ENCODE measurements at regions of chr22 and their contacts with region 1.

Region 1: DNA sequence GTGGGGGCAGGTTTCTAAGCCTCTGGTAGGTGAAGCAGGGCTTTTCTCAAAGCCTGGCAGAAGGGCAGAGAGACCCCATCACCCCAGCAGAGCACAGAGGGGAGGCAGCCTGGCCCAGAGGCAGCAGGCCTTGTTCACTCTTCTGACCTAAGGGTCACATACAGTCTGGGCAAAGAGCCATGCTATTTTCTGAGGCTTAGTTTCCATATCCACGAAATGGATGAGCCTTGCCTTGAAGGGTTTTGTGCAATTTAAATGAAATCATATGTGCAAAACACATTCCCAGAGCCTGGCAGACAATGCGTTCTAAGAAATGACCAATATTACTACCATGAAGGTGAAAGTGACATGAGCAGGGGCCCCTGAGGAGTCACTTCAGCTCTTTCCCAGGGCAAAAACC is 44.5 kb downstream of the HIRA start:
- DNase-seq: no peak
- ATAC-seq: no peak
- H3K4me3 ChIP-seq: no peak overlapping the region
- H3K27ac ChIP-seq: no peak overlapping the region
- H3K4me1 ChIP-seq: peaks cover 5 to 12% of the 10 kb centered on the region in 2 donors
- H3K27me3 ChIP-seq: no peaks in the 10 kb centered on the region
- CTCF ChIP-seq: no peak
- POLR2A ChIP-seq: no peak

Region 2: GRCh38 chr22:19473578-19473977 is 86.5 kb after region 1 on chr22:
- in situ Hi-C with region 1: no loop called
- intact Hi-C with region 1: loop called (anchors 1 kb)
- DNase-seq: peak; percentile 66 to 88
- ATAC-seq: peak; percentile 84 to 86
- H3K4me3 ChIP-seq: no peak overlapping the region
- H3K27ac ChIP-seq: peak overlapping the region; percentile 90 to 98 (median 97)
- H3K4me1 ChIP-seq: peaks cover 39 to 43% of the 10 kb centered on the region in 2 donors
- H3K27me3 ChIP-seq: no peaks in the 10 kb centered on the region
- CTCF ChIP-seq: peak in 4 of 5 experiments; percentile 25 to 36 (median 30)
- POLR2A ChIP-seq: no peak

Region 3: DNA sequence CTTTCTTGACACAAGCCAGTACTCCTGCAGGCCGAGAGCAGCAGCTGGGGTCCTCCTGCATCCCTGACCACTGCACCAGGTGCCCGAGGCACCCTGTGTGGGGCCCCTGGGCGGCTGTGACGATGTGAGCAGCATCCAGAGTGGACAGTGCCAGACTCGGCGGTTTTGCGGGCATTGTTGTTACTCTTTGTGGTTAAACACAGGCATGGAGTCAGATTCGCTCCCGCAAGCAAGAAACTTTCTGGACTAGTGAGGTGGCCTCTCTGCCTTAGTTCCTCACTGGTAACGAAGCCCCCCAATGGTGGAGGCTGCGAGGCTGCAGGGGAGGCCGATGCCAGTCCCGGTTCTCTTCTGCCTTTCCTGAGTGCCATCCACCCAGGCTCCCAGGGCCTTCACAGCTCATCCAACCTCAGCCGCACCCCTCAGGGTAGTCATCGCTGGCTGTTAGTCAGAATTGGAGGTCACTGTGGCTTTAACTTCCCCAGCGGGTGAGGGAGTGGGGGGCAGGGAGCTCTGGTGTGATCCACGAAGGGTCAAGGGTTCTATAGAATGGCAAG is 140.9 kb after region 1 on chr22:
- in situ Hi-C with region 1: no loop called
- intact Hi-C with region 1: no loop called
- DNase-seq: no peak
- ATAC-seq: no peak
- H3K4me3 ChIP-seq: no peak overlapping the region
- H3K27ac ChIP-seq: peak overlapping the region in 3 of 4 donors; percentile 40 to 85 (median 74)
- H3K4me1 ChIP-seq: peaks cover 0 to 8% of the 10 kb centered on the region in 2 donors
- H3K27me3 ChIP-seq: peaks cover 17 to 20% (median 18%) of the 10 kb centered on the region in 3 donors
- CTCF ChIP-seq: no peak
- POLR2A ChIP-seq: no peak